Activated CD4-positive, alpha-beta memory T cell treated with anti-CD3 and anti-CD28 coated beads, Interleukin-2, amount 10 ng/mL, durations not matched to agents 7 days and 5 days (primary cell): ENCODE measurements at regions of chr21 and their contacts with region 1.

Region 1: GRCh38 chr21:31558962-31559367 is 100.5 kb upstream of the SOD1 start:
- DNase-seq: peak; percentile 93
- H3K4me3 Mint-ChIP-seq: peak overlapping the region; percentile 86
- H3K27ac Mint-ChIP-seq: no peak overlapping the region
- H3K4me1 Mint-ChIP-seq: peaks cover 45% of the 10 kb centered on the region
- H3K27me3 Mint-ChIP-seq: peaks cover 34% of the 10 kb centered on the region

Region 2: GRCh38 chr21:31198575-31198974 is 360.4 kb before region 1 on chr21:
- CTCF ChIA-PET with region 1: interaction called, 15 read pairs
- POLR2A ChIA-PET with region 1: interaction called, 8 read pairs
- DNase-seq: no peak
- H3K4me3 Mint-ChIP-seq: no peak overlapping the region
- H3K27ac Mint-ChIP-seq: no peak overlapping the region
- H3K4me1 Mint-ChIP-seq: peaks cover 39% of the 10 kb centered on the region
- H3K27me3 Mint-ChIP-seq: no peaks in the 10 kb centered on the region

Region 3: GRCh38 chr21:31343680-31344480 is 215.1 kb before region 1 on chr21 and contains the start of gene TIAM1:
- CTCF ChIA-PET with region 1: interaction called, 10 read pairs
- POLR2A ChIA-PET with region 1: interaction called, 3 read pairs
- DNase-seq: peak; percentile 31
- H3K4me3 Mint-ChIP-seq: peak within 1 kb of the TSS; percentile 91
- H3K27ac Mint-ChIP-seq: peak within 1 kb of the TSS; percentile 56
- H3K4me1 Mint-ChIP-seq: peaks cover 57% of the 10 kb centered on the region
- H3K27me3 Mint-ChIP-seq: peaks cover 35% of the 10 kb centered on the region
- total RNA-seq, gene TIAM1: 57.6 to 60.6 TPM

Region 4: DNA sequence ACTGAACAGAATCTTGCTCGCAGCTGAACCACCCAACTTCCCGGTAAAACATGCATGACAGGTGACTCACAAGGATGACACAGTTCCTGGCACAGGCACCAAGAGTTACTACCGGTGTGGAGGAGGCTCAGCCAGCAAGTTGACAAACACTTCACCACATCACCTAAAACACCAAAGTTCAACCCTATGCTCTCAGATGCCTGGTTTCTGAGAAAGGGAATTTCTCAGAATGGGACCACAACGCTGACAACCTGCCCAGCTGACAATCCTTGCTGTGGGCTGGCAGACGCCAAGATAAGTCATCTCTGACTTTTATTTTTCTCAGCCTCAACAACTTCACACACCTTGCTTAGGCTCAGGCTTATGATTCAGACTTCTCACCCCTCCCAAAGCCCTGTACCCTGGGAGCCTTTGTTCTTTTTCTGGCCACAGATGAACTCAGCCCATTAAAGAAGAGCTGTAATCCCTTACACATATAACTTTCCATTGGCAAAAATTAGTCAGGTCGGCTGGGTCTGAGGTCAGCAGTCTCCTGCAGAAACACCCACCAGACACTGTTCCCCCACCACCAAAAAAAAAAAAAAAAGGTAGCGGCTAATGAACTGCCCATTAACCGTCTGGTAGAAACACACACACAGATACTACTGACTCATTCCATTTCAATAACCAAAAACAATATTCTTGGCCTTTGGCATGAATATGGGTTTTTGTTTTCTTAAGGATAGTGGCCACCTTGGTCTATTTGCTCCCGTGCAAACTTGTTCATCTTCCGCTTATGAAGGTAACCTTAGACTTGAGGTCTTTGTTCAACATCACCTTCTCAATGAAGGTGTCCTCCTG is 204.1 kb before region 1 on chr21:
- CTCF ChIA-PET with region 1: interaction called, 6 read pairs
- POLR2A ChIA-PET with region 1: interaction called, 21 read pairs
- DNase-seq: peak; percentile 88
- H3K4me3 Mint-ChIP-seq: peak overlapping the region; percentile 44
- H3K27ac Mint-ChIP-seq: peak overlapping the region; percentile 84
- H3K4me1 Mint-ChIP-seq: peaks cover 57% of the 10 kb centered on the region
- H3K27me3 Mint-ChIP-seq: no peaks in the 10 kb centered on the region

Region 5: DNA sequence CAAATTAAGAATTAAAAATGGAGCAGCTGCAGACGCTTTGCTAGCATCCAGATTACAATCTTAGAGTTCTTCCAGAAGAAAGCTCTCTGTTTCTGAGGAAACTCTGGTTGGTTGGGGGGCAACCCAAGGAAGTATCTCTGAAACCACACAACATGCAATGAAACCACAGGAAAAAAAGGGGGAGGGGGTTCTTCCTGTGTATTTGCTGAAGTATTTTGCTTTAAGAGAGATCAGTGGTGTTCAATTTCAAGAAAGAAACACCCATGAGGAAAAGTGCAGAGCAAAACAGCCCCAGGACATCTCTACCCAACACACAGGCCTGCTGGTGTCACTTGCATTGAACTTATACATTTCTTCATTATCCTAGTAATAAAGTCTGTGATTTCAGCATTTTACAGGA is 195.2 kb before region 1 on chr21:
- CTCF ChIA-PET with region 1: interaction called, 6 read pairs
- POLR2A ChIA-PET with region 1: interaction called, 12 read pairs
- DNase-seq: peak; percentile 47
- H3K4me3 Mint-ChIP-seq: peak overlapping the region; percentile 41
- H3K27ac Mint-ChIP-seq: peak overlapping the region; percentile 74
- H3K4me1 Mint-ChIP-seq: peaks cover 63% of the 10 kb centered on the region
- H3K27me3 Mint-ChIP-seq: no peaks in the 10 kb centered on the region